Heart left ventricle (tissue), 16 donors: ENCODE measurements at regions of chr1 and their contacts with region 1.

Region 1: GRCh38 chr1:6245086-6245868 is 1.3 kb downstream of the HES3 start:
- DNase-seq: peak; percentile 73 to 91 (median 82)
- ATAC-seq: peak; percentile 30 to 82 (median 80)
- H3K4me3 ChIP-seq: peak overlapping the region in 1 of 12 donors; percentile 25
- H3K27ac ChIP-seq: no peak overlapping the region
- H3K4me1 ChIP-seq: peaks cover 0 to 56% (median 28%) of the 10 kb centered on the region in 12 donors
- H3K27me3 ChIP-seq: peaks cover 35 to 97% (median 65%) of the 10 kb centered on the region in 9 donors
- CTCF ChIP-seq: peak; percentile 68 to 87 (median 80)
- POLR2A ChIP-seq: no peak

Region 2: GRCh38 chr1:5836776-5837440 is 408.4 kb before region 1 on chr1:
- intact Hi-C with region 1: no loop called
- DNase-seq: no peak
- ATAC-seq: no peak
- H3K4me3 ChIP-seq: no peak overlapping the region
- H3K27ac ChIP-seq: no peak overlapping the region
- H3K4me1 ChIP-seq: no peaks in the 10 kb centered on the region
- H3K27me3 ChIP-seq: peaks cover 0 to 52% (median 6%) of the 10 kb centered on the region in 9 donors
- CTCF ChIP-seq: no peak
- POLR2A ChIP-seq: no peak

Region 3: GRCh38 chr1:6052543-6053205 is 192.6 kb before region 1 on chr1:
- intact Hi-C with region 1: loop called in 9 of 10 experiments (anchors 2 to 5 kb)
- DNase-seq: peak in 4 of 5 donors; percentile 63 to 74 (median 66)
- ATAC-seq: peak in 3 of 4 donors; percentile 43 to 68 (median 63)
- H3K4me3 ChIP-seq: no peak overlapping the region
- H3K27ac ChIP-seq: no peak overlapping the region
- H3K4me1 ChIP-seq: peaks cover 0 to 18% (median 11%) of the 10 kb centered on the region in 12 donors
- H3K27me3 ChIP-seq: no peaks in the 10 kb centered on the region
- CTCF ChIP-seq: peak; percentile 21 to 68 (median 50)
- POLR2A ChIP-seq: no peak

Region 4: DNA sequence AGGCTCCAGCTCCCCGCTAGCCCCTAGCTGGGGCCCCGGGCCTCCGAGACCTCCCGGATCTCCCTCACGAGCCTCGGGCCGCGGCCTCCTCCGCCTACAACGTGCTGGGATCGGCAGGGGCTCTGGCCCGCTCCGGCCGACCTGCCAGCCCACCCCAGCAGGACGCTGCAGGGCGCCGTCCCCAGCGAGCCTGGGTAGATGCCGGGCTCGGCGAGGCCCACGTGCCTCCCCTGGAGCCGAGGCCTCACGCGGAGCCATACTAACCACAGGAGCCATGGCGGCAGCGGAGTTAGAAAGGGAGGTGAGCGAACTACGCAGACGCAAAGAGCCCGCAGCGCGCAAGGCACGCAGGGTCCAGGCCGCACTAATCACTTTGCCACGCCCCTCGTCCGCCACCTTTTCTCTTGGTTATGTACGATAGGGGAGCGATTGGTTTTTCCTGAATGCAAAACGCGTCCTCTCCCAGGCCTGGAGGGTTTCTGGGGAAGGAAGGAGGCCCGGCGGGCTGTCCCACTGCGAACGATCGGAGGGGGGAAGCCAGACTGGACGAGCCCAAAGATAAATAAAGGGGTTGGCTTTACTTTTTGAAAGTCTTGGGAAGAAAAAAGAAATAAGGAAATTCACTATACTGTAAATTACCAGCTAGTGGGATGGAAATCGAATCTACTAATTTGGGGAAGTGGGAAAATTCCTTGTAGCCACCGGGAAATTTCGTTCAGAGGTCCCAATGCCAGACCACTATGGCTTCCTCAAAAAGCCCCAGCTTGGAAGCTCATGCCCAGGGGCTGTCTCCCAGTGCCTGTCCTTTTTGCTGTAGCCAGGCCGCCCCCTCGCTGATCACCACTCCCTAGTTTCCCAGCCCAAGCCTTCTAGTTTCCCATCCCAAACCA is 45.7 kb before region 1 on chr1 and contains the start of gene RPL22:
- intact Hi-C with region 1: no loop called
- DNase-seq: peak; percentile 98 to 99 (median 98)
- ATAC-seq: peak; percentile 97 to 99 (median 98)
- H3K4me3 ChIP-seq: peak within 1 kb of the TSS; percentile 77 to 100 (median 89)
- H3K27ac ChIP-seq: peak within 1 kb of the TSS; percentile 66 to 93 (median 84)
- H3K4me1 ChIP-seq: peaks cover 8 to 31% (median 21%) of the 10 kb centered on the region in 12 donors
- H3K27me3 ChIP-seq: no peaks in the 10 kb centered on the region
- CTCF ChIP-seq: peak in 1 of 12 donors; percentile 10
- POLR2A ChIP-seq: peak in 1 of 2 donors; percentile 78
- total RNA-seq, gene RPL22: 63.6 to 343 (median 241) TPM

Region 5: DNA sequence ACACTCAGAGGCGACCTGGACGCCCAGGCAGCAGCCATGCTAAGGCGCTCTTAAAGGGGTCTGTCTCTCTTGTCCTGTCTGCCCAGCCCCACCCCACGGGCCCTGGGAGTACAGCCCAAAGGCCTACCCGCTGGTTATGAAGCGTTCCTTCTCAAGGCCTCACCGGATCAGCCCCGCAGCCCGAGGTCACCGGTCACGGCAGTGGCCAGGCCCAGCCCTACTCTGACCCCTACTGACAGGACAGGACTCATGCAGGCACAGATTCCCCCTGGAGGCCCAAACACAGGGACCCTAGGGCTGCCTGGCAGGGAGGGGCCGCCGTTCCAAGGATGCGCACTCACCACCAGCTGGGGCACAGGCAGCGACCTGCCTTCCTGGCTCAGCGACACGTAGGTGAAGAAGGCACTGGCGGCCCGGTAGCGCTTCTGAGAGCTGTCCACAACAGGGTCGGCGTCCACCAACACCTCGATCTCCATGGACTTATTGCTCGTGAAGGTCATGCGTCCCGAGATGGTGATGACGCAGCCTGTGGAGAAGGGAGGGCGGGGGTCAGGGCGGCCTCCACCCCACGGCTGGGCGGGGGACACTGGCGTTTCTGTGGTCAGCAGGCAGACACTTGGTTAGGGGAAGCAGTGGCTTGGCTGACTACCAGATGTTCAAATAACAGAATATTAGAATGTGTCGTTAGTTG is 35.6 kb after region 1 on chr1:
- intact Hi-C with region 1: loop called in 2 of 10 experiments (anchors 2 to 5 kb)
- DNase-seq: peak in 1 of 5 donors; percentile 64
- ATAC-seq: peak in 3 of 4 donors; percentile 18 to 49 (median 22)
- H3K4me3 ChIP-seq: no peak overlapping the region
- H3K27ac ChIP-seq: no peak overlapping the region
- H3K4me1 ChIP-seq: peaks cover 0 to 14% (median 8%) of the 10 kb centered on the region in 12 donors
- H3K27me3 ChIP-seq: no peaks in the 10 kb centered on the region
- CTCF ChIP-seq: peak; percentile 22 to 54 (median 33)
- POLR2A ChIP-seq: no peak

Region 6: DNA sequence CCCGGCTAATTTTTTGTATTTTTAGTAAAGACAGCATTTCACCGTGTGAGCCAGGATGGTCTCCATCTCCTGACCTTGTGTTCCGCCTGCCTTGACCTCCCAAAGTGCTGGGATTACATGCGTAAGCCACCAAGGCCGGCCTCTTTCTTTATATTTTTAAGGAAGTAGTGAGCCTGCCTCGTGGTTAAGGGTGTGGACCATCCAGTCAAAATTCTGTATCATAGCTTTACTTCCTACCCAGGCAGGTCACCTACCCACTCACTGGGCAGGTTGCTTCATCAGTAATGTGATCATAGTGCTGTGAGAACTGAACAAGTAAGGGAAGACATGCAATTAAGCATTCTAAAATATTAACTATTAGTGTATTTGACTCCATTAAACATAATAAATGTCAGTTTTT is 156.4 kb after region 1 on chr1:
- intact Hi-C with region 1: loop called in 9 of 10 experiments (anchors 1 to 10 kb)
- DNase-seq: peak in 1 of 5 donors; percentile 7
- ATAC-seq: no peak
- H3K4me3 ChIP-seq: no peak overlapping the region
- H3K27ac ChIP-seq: no peak overlapping the region
- H3K4me1 ChIP-seq: no peaks in the 10 kb centered on the region
- H3K27me3 ChIP-seq: peaks cover 0 to 16% (median 0%) of the 10 kb centered on the region in 9 donors
- CTCF ChIP-seq: no peak
- POLR2A ChIP-seq: no peak

Region 7: GRCh38 chr1:6438047-6438525 is 192.8 kb after region 1 on chr1:
- intact Hi-C with region 1: loop called in 3 of 10 experiments (anchors 2 to 5 kb)
- DNase-seq: peak in 2 of 5 donors; percentile 51 to 56
- ATAC-seq: peak; percentile 60 to 78 (median 69)
- H3K4me3 ChIP-seq: no peak overlapping the region
- H3K27ac ChIP-seq: no peak overlapping the region
- H3K4me1 ChIP-seq: peaks cover 0 to 9% (median 0%) of the 10 kb centered on the region in 12 donors
- H3K27me3 ChIP-seq: peaks cover 10 to 53% (median 31%) of the 10 kb centered on the region in 9 donors
- CTCF ChIP-seq: peak; percentile 88 to 96 (median 94)
- POLR2A ChIP-seq: no peak